Left lung (tissue), 14 donors: ENCODE measurements at regions of chr2 and their contacts with region 1.

Region 1: DNA sequence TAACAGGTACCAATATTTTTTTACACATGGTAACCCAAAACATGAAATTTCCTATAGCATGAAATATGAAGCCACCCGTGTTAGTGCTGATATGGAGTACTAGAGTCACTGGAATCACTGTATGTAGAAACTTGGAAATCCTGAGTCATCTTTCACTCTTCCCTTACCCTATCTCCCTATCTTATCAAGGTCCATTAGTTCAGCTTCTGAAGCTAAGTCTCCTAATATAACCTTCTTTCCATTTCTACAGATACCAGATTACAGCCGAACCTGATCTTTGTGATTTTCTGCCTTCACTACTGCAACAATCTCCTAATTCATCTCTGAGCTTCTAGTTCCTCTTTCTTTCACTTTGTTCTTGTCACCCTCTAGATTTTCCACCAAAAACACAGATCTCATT is 59.0 kb downstream of the SEPTIN10 start:
- DNase-seq: no peak
- ATAC-seq: no peak
- H3K4me3 ChIP-seq: no peak overlapping the region
- H3K27ac ChIP-seq: no peak overlapping the region
- H3K4me1 ChIP-seq: no peaks in the 10 kb centered on the region
- H3K27me3 ChIP-seq: no peaks in the 10 kb centered on the region
- CTCF ChIP-seq: no peak

Region 2: DNA sequence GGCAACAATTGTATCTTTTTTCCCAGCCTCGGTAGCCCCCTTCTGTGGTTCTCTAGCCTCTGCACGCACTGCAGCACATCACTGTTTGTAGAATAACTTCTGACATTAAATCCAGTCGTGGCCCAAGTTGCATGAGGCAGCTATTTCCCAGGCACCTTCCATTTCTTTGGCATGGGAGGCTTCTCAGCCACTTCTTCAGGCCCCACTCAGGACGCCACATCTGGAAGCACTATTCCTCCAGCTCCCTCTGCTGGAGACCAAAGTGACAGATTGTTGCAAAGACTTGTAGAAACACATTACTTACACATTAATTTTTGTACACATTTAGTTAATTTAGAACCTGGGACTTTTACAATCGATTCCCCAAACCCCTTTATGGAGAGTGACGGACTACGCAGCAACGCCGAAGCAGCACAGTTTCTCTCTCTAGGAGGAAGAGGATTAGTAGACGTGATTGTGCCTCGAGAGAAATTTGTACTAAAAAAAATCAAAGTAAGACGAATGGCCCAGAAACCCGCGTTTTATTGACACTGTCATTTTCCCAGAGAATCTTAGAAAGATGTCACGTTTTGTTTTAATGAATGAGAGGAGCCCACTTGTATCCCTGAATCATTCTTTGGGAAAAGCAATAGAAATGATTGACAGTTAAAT is 181.5 kb after region 1 on chr2:
- intact Hi-C with region 1: loop called in 1 of 2 experiments (anchors 5 kb)
- DNase-seq: peak in 2 of 4 donors; percentile 45 to 70
- ATAC-seq: peak; percentile 92
- H3K4me3 ChIP-seq: no peak overlapping the region
- H3K27ac ChIP-seq: no peak overlapping the region
- H3K4me1 ChIP-seq: no peaks in the 10 kb centered on the region
- H3K27me3 ChIP-seq: no peaks in the 10 kb centered on the region
- CTCF ChIP-seq: peak; percentile 37 to 51